ENCODE measurements at regions of chr2 and their contacts with region 1.

Region 1: DNA sequence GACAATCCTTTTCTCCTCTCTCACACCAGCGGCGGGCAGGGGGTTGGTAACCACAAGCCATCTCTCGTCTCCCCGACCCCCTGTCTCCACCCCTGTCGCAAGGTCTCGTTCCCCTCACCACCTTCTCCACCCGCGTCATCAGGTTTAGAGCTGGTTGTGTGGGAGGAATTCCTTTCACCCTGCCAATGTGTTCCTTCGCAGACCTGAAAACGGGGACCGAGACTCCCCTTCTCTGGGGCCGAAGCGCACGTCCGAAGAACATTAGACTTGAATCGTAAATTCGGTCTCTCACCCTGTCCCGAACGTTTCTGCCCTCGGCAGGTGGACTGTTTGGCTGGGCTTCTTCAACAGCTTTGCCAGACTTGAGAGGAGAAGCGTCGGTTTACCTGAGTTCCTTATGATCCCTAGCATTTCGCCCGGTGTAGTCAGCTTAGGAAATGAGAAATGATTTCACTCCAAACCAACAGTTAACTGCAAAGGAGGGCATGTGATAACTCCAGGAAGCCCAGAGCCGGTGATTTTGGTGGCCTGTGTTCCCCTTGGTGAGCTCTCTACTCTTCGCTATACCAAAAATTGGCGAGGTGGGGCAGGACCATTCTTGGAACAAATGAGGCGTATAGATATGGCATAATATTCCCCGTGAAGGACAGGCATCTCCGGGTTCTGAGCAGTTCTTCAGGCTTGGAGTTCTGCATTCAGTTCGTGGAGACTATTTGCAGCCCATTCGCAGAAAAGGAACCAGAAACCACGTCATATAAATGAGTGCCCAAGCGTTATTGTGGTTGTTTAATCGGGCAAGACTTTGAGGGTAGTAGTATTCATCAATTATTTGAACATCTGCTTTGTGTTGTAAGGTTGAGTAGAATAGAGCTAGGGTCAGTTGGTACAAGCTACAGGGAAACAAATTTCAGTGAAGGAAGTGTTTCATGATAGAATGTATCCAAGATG is 694 bp downstream of the CFAP36 start:
- DNase-seq: peak in 8 of 9 experiments; percentile 14 to 67 (median 44)
- ATAC-seq: peak; percentile 27
- H3K4me3 ChIP-seq: peak overlapping the region; percentile 85 to 87
- H3K4me3 Mint-ChIP-seq: peak overlapping the region; percentile 97
- H3K27ac ChIP-seq: peak overlapping the region; percentile 85 to 95
- H3K27ac Mint-ChIP-seq: peak overlapping the region; percentile 100
- H3K4me1 ChIP-seq: peaks cover 8% of the 10 kb centered on the region
- H3K4me1 Mint-ChIP-seq: peaks cover 20% of the 10 kb centered on the region
- H3K27me3 ChIP-seq: no peaks in the 10 kb centered on the region
- H3K27me3 Mint-ChIP-seq: no peaks in the 10 kb centered on the region
- CTCF ChIP-seq: no peak

Region 2: GRCh38 chr2:53767405-53768241 is 1752.6 kb before region 1 on chr2 and contains the start of gene CHAC2:
- CTCF ChIA-PET with region 1: no interaction called
- POLR2A ChIA-PET with region 1: interaction called, 5 read pairs
- intact Hi-C with region 1: loop called (anchors 2 to 10 kb)
- DNase-seq: peak; percentile 50 to 92 (median 84)
- ATAC-seq: peak; percentile 87
- H3K4me3 ChIP-seq: peak within 1 kb of the TSS; percentile 71 to 96
- H3K4me3 Mint-ChIP-seq: peak within 1 kb of the TSS; percentile 92
- H3K27ac ChIP-seq: peak within 1 kb of the TSS; percentile 70 to 86
- H3K27ac Mint-ChIP-seq: peak within 1 kb of the TSS; percentile 93
- H3K4me1 ChIP-seq: peaks cover 9% of the 10 kb centered on the region
- H3K4me1 Mint-ChIP-seq: peaks cover 29% of the 10 kb centered on the region
- H3K27me3 ChIP-seq: no peaks in the 10 kb centered on the region
- H3K27me3 Mint-ChIP-seq: no peaks in the 10 kb centered on the region
- CTCF ChIP-seq: peak; percentile 31
- total RNA-seq, gene CHAC2: 0.87 to 1.0 TPM

Region 3: DNA sequence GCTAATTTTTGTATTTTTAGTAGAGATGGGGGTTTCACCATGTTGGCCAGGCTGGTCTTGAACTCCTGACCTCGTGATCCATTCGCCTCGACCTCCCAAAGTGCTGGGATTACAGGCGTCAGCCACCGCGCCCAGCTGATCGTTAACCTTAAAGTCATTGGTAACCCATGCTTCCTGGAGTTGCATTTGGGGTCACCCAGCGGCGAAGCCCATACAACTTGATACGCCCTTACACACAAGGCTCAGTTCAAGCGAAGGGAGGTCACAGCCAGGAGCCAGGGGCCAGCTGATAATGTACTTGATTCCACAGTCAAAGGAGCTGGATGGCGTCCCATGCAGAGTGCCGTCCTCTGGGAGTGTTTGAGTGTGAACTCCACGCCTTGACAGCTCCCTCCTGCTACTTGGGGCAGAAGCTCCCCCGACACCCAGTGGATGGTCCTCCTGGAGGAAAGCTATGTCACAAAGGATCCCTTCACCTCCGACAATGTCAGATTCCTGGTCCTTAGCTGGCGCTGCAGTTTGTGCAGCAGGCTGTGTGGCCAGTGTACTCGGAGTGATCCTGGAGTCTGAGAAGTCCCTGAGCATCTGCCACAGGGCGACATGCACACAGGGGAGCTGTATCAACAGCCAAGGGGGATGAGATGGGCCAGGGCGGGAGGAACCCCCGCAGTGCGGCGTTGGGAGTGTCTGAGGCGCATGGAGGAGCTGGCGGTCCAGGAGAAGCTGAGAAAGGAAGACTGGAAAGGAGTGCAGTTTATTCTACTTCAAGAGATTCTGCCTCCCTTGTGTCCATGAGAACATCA is 296.1 kb before region 1 on chr2:
- CTCF ChIA-PET with region 1: no interaction called
- POLR2A ChIA-PET with region 1: interaction called, 4 read pairs
- intact Hi-C with region 1: loop called in 1 of 2 experiments (anchors 2 kb)
- DNase-seq: peak in 3 of 9 experiments; percentile 5 to 52 (median 34)
- ATAC-seq: no peak
- H3K4me3 ChIP-seq: peak overlapping the region in 1 of 2 experiments; percentile 53
- H3K4me3 Mint-ChIP-seq: peak overlapping the region; percentile 84
- H3K27ac ChIP-seq: peak overlapping the region; percentile 68 to 72
- H3K27ac Mint-ChIP-seq: peak overlapping the region; percentile 91
- H3K4me1 ChIP-seq: peaks cover 28% of the 10 kb centered on the region
- H3K4me1 Mint-ChIP-seq: peaks cover 42% of the 10 kb centered on the region
- H3K27me3 ChIP-seq: no peaks in the 10 kb centered on the region
- H3K27me3 Mint-ChIP-seq: no peaks in the 10 kb centered on the region
- CTCF ChIP-seq: no peak

Region 4: DNA sequence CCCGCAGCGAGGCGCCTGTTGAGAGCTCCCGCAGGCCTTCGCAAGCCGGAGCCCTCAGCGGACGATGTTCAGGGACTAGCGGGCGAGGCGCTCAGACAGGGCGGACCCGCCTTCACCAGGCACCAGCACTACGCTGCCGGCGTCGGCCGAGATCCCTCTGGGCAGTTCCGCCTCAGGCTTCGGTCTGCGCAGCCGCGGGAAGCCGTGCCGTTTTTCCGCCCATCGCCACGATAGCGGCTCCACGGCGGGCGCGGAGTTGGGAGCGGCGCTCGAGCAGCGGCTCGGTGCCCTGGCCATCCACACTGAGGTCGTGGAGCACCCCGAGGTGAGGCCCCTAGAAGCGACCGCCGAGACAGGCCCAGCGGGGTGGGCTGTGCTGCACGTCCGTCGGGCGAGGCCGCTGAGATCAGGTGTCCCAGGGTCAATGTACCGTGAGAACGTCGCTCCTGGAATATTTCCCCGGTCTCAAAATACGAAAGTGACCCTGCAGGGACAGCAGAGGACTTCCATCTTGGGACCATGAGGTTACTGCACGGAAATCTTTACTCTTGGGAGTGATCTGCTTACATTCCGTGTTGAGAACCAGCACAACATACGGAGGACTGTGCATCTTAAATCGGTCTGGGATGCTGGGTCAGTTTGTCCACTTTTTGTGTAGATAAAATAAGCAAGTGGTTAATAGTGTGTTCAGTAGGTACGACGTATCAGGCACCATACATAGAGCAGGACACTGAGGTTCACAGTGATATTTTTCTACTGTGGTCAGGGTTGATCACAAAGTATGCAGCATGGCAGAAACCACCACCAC is 237.9 kb before region 1 on chr2:
- CTCF ChIA-PET with region 1: no interaction called
- POLR2A ChIA-PET with region 1: interaction called, 3 read pairs
- intact Hi-C with region 1: loop called in 1 of 2 experiments (anchors 5 kb)
- DNase-seq: peak; percentile 77 to 93 (median 87)
- ATAC-seq: peak; percentile 99
- H3K4me3 ChIP-seq: peak overlapping the region; percentile 62 to 70
- H3K4me3 Mint-ChIP-seq: peak overlapping the region; percentile 94
- H3K27ac ChIP-seq: peak overlapping the region; percentile 72 to 96
- H3K27ac Mint-ChIP-seq: peak overlapping the region; percentile 99
- H3K4me1 ChIP-seq: peaks cover 7% of the 10 kb centered on the region
- H3K4me1 Mint-ChIP-seq: peaks cover 31% of the 10 kb centered on the region
- H3K27me3 ChIP-seq: no peaks in the 10 kb centered on the region
- H3K27me3 Mint-ChIP-seq: no peaks in the 10 kb centered on the region
- CTCF ChIP-seq: no peak

Region 5: DNA sequence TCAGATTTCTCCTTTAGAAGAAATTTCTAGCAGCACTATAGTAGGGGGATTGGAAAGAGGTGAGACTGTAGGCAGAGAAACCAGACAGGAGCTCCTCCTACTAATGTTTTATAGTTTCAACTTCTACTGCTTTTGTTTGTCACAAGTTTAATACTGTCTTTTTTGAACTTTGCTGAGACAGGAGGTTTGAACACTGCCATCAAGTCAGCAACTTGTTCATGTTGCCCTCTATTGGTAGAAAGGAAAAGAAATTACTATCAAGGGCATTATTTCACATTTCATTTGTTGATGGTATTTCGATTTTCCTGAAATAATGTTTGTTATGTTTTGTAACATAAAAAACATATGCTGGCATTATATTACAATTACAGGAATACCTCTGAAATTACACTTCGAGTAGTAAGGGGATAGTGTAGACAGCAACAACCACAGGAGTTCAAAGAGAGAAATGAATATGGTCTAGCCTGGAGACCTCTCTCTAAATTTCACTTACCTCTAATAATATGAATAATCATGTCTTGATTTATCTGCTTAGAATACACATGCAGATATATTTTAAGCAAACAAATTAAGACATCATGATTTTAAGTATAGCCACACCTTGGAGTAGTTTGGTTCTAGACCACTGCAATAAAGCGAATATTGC is 88.1 kb before region 1 on chr2:
- CTCF ChIA-PET with region 1: no interaction called
- POLR2A ChIA-PET with region 1: interaction called, 3 read pairs
- intact Hi-C with region 1: loop called in 1 of 2 experiments (anchors 5 kb)
- DNase-seq: peak in 2 of 9 experiments; percentile 35 to 59
- ATAC-seq: peak; percentile 42
- H3K4me3 ChIP-seq: no peak overlapping the region
- H3K4me3 Mint-ChIP-seq: no peak overlapping the region
- H3K27ac ChIP-seq: no peak overlapping the region
- H3K27ac Mint-ChIP-seq: no peak overlapping the region
- H3K4me1 ChIP-seq: no peaks in the 10 kb centered on the region
- H3K4me1 Mint-ChIP-seq: no peaks in the 10 kb centered on the region
- H3K27me3 ChIP-seq: no peaks in the 10 kb centered on the region
- H3K27me3 Mint-ChIP-seq: no peaks in the 10 kb centered on the region
- CTCF ChIP-seq: peak; percentile 49

Region 6: GRCh38 chr2:55565613-55566012 is 45.4 kb after region 1 on chr2:
- CTCF ChIA-PET with region 1: no interaction called
- POLR2A ChIA-PET with region 1: no interaction called
- intact Hi-C with region 1: no loop called
- DNase-seq: peak in 2 of 9 experiments; percentile 35 to 68
- ATAC-seq: peak; percentile 83
- H3K4me3 ChIP-seq: no peak overlapping the region
- H3K4me3 Mint-ChIP-seq: peak overlapping the region; percentile 9
- H3K27ac ChIP-seq: peak overlapping the region in 1 of 2 experiments; percentile 24
- H3K27ac Mint-ChIP-seq: peak overlapping the region; percentile 88
- H3K4me1 ChIP-seq: peaks cover 16% of the 10 kb centered on the region
- H3K4me1 Mint-ChIP-seq: peaks cover 27% of the 10 kb centered on the region
- H3K27me3 ChIP-seq: no peaks in the 10 kb centered on the region
- H3K27me3 Mint-ChIP-seq: no peaks in the 10 kb centered on the region
- CTCF ChIP-seq: no peak

Region 7: DNA sequence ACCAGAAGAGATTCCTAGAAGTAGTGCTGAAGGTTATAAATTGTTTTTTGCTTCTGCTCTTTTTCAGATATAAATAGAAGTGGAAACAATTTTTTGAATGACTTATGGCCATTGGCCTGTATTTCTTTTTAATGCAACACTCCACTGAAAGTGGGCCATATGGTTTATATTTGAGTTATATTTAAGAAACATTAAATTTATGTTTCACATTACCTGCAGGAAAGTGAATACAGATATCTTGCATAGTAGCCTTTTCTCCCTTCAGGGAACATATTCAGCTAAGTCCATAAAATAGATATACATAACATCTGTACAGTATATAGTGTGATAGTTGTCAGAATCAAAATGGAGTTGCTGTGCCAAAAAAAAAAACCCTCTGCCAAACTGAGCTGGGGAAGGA is 456.5 kb after region 1 on chr2:
- CTCF ChIA-PET with region 1: no interaction called
- POLR2A ChIA-PET with region 1: no interaction called
- intact Hi-C with region 1: no loop called
- DNase-seq: no peak
- ATAC-seq: no peak
- H3K4me3 ChIP-seq: no peak overlapping the region
- H3K4me3 Mint-ChIP-seq: no peak overlapping the region
- H3K27ac ChIP-seq: no peak overlapping the region
- H3K27ac Mint-ChIP-seq: no peak overlapping the region
- H3K4me1 ChIP-seq: no peaks in the 10 kb centered on the region
- H3K4me1 Mint-ChIP-seq: no peaks in the 10 kb centered on the region
- H3K27me3 ChIP-seq: no peaks in the 10 kb centered on the region
- H3K27me3 Mint-ChIP-seq: peaks cover 6% of the 10 kb centered on the region
- CTCF ChIP-seq: no peak